HCT116 (cell line): ENCODE measurements at regions of chr4 and their contacts with region 1.

Region 1: DNA sequence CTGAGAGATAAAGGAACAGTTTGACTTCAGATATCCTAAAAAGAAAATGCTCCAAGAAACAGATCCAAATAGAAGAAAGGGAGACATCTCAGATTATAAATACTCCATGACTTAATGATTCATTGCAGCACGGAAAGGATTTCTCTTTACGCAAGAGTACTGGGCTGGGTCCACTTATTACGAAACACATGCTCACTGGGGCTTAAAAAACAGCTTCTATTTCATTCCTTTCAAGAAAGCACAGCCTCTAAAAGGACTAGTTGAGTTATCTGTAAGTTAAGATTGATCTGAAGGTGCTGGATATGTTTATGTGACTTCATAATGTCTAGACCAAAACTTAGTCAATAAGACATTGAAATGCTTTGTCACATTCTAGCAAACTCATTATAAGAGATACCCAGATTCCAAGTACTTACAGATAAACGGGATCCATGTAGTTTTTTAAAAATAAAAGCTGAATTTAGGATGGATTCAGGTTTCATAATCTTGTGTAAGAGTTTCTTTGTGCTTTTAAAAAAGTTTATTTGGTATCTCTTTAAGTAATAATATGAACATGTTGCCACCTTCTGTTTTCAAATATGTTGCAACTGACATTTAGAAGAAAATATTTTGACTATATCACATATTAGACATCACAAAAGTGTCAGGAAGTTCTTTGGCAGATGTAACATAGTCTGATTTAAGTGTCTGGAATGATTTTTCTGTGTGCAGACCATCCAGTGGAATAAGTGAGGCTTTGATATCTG is 109.5 kb upstream of the MYOZ2 start:
- DNase-seq: peak; percentile 18
- ATAC-seq: peak; percentile 47; the same call in 1 of the 2 replicates
- H3K4me3 ChIP-seq: peak overlapping the region in 1 of 2 experiments; percentile 16; a peak in 1 of 4 replicates
- H3K27ac ChIP-seq: no peak overlapping the region
- H3K4me1 ChIP-seq: peaks cover 2 to 12% of the 10 kb centered on the region in 2 experiments; a peak in 2 of 4 replicates
- H3K27me3 ChIP-seq: no peaks in the 10 kb centered on the region
- CTCF ChIP-seq: no peak
- POLR2A ChIP-seq: no peak
- RAD21 ChIP-seq: no peak

Region 2: DNA sequence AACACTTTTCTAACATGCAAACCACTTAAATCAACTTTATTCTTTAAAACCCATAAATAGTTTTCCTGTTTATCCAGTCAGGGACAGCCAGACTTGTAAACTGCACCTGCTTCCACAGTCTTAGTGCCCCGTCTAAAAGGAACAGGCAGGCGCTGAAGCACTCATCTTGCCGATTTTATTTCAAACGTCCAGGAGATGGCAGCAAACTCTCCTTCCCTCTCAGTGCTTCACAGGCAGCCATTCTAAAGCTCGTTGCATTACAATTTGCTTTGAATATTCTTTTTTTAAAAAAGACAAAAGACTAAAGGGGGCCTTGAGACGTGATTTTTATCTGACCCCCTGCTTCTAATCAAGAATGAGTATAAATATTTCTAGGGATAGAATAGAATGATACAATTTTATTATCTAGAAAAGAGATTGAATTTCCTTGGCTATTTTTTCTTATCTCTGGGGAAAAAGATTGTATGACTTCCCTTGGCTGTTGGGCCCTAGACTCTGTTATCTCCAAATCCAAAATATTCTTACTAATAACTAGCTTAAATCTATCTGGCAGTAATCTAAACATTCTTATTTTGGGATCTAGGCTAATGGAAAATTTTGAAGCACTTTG is 16.0 kb after region 1 on chr4:
- CTCF ChIA-PET with region 1: interaction called, 37 read pairs
- POLR2A ChIA-PET with region 1: no interaction called
- RAD21 ChIA-PET with region 1: no interaction called
- intact Hi-C with region 1: no loop called
- DNase-seq: peak; percentile 67
- ATAC-seq: peak; percentile 95
- H3K4me3 ChIP-seq: no peak overlapping the region
- H3K27ac ChIP-seq: no peak overlapping the region
- H3K4me1 ChIP-seq: no peaks in the 10 kb centered on the region
- H3K27me3 ChIP-seq: no peaks in the 10 kb centered on the region
- CTCF ChIP-seq: peak; percentile 61 to 80 (median 72)
- POLR2A ChIP-seq: no peak
- RAD21 ChIP-seq: peak; percentile 88

Region 3: GRCh38 chr4:119184128-119184527 is 158.0 kb after region 1 on chr4:
- CTCF ChIA-PET with region 1: no interaction called
- POLR2A ChIA-PET with region 1: no interaction called
- RAD21 ChIA-PET with region 1: no interaction called
- intact Hi-C with region 1: no loop called
- DNase-seq: no peak
- ATAC-seq: no peak
- H3K4me3 ChIP-seq: no peak overlapping the region
- H3K27ac ChIP-seq: no peak overlapping the region
- H3K4me1 ChIP-seq: peaks cover 4 to 8% of the 10 kb centered on the region in 2 experiments; a peak in 2 of 4 replicates
- H3K27me3 ChIP-seq: no peaks in the 10 kb centered on the region
- CTCF ChIP-seq: no peak
- POLR2A ChIP-seq: no peak
- RAD21 ChIP-seq: no peak

Region 4: DNA sequence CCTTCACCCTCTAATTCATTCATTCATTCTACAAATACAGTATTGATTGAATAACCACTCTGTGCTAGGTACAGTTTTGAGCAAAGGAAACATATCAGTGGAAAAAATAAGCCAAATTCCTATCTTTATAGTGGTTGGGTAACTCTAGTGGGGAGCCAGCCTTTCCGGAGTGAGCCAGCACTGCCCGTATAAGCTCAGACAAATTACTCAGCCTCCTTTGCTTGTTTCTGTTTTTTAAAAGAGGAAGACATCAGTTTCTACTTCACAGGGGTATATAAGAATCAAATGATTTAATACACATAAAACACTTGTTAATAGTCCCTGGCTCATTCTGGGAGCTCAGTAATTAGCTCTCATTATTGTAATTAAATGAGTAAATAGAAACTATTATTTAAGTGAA is 1278.7 kb after region 1 on chr4:
- CTCF ChIA-PET with region 1: no interaction called
- POLR2A ChIA-PET with region 1: no interaction called
- RAD21 ChIA-PET with region 1: no interaction called
- intact Hi-C with region 1: no loop called
- DNase-seq: no peak
- ATAC-seq: no peak
- H3K4me3 ChIP-seq: no peak overlapping the region
- H3K27ac ChIP-seq: no peak overlapping the region
- H3K4me1 ChIP-seq: no peaks in the 10 kb centered on the region
- H3K27me3 ChIP-seq: no peaks in the 10 kb centered on the region
- CTCF ChIP-seq: no peak
- POLR2A ChIP-seq: no peak
- RAD21 ChIP-seq: no peak